H1 (cell line): ENCODE measurements at regions of chr4 and their contacts with region 1.

Region 1: DNA sequence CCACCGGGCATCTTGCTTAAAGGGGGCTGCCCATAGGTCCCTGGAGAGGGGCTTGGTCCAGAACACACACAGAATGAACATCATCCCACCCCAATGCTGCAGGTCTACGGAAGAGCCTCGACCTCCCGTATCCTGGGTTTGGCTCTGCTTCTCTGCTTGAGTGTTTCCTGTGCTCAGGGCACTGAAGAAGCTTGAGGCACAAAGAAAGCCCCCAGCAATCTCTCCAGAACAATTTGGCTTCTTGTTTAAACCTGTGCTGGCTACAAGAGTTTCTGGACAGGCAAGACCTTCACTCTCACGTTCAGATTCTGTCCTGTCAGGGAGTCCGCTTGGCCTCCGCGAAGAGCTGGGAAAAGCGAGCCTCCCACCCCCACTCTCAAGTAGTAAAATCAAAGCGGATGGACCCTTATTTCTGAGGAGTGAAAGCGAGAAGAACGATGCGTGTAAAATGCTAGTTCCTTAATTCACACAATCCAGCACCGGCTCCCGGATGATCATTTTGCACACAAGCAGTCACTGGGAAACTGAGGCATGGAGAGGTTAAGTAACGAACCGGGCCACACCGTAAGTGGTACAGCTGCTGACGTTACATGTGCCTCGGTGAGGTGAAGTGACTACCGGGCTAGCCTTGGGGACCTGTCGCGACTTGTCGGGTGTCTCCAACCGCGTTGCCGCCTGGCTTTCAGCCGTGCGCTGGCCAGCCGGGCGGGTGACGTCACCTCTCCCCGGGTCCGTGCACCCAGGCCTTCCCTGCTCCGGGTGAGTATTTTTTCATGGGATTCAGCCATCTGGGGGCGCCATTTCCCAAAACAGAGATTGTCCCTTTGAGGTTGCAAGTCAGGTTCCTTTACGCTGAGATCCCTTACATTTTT is 3.1 kb upstream of the SFRP2 start:
- DNase-seq: peak; percentile 85 to 97
- H3K4me3 ChIP-seq: peak overlapping the region; percentile 59 to 94 (median 78)
- H3K27ac ChIP-seq: no peak overlapping the region
- H3K4me1 ChIP-seq: peaks cover 0 to 18% (median 12%) of the 10 kb centered on the region in 4 experiments; a peak in 6 of 7 replicates
- H3K27me3 ChIP-seq: peaks cover 0 to 11% (median 8%) of the 10 kb centered on the region in 4 experiments; a peak in 5 of 7 replicates
- CTCF ChIP-seq: peak in 2 of 3 experiments; percentile 76 to 78; a peak in 3 of 4 replicates
- EP300 ChIP-seq: peak in 1 of 2 experiments; percentile 29; a peak in 1 of 3 replicates
- POLR2A ChIP-seq: no peak; a peak in 1 of 3 replicates
- RAD21 ChIP-seq: peak; percentile 73 to 81

Region 2: DNA sequence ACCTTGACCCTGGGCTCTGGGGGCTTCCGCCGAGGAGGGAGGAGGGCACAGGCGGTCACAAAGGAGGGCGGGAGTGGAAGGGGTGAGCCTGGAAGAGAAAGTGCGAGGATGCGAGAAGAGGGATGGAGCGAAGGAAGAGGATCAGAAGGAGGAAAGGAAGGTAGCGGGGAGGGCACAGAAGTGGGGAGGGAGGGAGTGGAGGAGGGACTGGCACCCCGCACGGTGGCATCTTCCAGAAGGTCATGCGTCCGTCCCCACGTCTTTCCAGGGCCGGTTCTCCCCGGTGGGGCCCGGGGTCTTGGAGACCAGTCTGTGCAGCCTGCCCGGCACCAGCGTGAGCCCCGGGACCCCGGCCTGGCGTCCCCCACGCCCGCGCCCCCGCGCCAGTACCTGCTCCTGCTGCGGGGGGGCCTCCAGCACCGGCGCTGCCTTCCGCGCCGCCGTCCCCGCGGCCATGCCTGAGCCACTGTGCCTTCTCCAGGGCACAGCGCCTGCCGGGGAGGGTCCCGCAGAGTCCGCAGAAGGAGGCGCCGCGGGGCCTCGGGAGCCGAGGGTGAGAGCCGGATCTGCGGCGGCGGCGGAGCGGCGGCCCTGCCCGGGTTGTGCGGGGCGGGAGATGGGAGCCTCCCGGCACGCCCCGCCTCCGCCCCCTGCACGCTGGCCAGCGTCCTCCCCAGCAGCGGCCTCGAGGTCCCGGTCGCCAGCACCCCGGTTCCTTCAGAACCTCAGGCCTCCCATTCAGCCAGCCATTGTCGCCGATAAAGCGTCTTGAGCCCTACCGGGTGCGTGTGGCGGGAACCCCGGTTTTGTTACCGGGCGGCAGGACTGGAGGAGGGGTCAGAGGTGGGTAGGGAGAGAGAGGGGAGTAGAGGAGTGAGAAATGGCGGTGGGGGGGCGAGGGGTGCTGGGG is 32.3 kb before region 1 on chr4 and contains the start of gene RNF175:
- CTCF ChIA-PET with region 1: interaction called, 5 read pairs
- POLR2A ChIA-PET with region 1: interaction called, 13 read pairs
- DNase-seq: peak in 1 of 2 experiments; percentile 71
- H3K4me3 ChIP-seq: peak within 1 kb of the TSS; percentile 70 to 87 (median 72)
- H3K27ac ChIP-seq: peak within 1 kb of the TSS; percentile 60; the same call in 1 of the 2 replicates
- H3K4me1 ChIP-seq: peaks cover 11 to 27% (median 21%) of the 10 kb centered on the region in 4 experiments; a peak in 6 of 7 replicates
- H3K27me3 ChIP-seq: peaks cover 0 to 4% (median 0%) of the 10 kb centered on the region in 4 experiments; a peak in 5 of 7 replicates
- CTCF ChIP-seq: no peak
- EP300 ChIP-seq: no peak
- POLR2A ChIP-seq: no peak; a peak in 1 of 3 replicates
- RAD21 ChIP-seq: no peak
- total RNA-seq, gene RNF175: 7.3 and 7.9 TPM in 2 replicates

Region 3: DNA sequence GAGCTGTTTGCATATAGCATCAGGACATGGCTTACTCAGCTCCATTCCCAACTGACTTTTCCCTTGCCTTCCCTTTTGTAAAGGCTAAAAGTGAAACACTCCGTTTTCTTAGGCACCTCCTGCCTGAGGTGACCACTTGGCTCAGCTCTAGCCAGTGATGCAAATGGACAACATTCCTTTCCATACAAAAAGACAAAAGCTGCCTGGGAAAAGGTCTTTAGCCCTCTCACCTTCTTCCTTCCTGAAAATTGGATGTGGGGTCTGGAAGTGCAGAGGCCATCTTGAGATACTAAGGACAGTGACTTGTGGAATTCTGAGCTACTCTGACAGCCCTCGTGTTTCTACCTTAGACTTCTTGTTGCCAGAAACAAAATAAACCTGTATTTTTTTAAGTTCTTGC is 24.6 kb after region 1 on chr4:
- CTCF ChIA-PET with region 1: interaction called, 10 read pairs
- POLR2A ChIA-PET with region 1: interaction called, 7 read pairs
- DNase-seq: no peak
- H3K4me3 ChIP-seq: no peak overlapping the region
- H3K27ac ChIP-seq: no peak overlapping the region
- H3K4me1 ChIP-seq: peaks cover 0 to 6% (median 0%) of the 10 kb centered on the region in 4 experiments; a peak in 1 of 7 replicates
- H3K27me3 ChIP-seq: peaks cover 0 to 1% (median 0%) of the 10 kb centered on the region in 4 experiments; a peak in 1 of 7 replicates
- CTCF ChIP-seq: no peak
- EP300 ChIP-seq: no peak
- POLR2A ChIP-seq: no peak
- RAD21 ChIP-seq: no peak

Region 4: GRCh38 chr4:154018659-154019058 is 226.7 kb after region 1 on chr4:
- CTCF ChIA-PET with region 1: interaction called, 117 read pairs
- POLR2A ChIA-PET with region 1: interaction called, 14 read pairs
- DNase-seq: peak; percentile 39 to 76
- H3K4me3 ChIP-seq: no peak overlapping the region
- H3K27ac ChIP-seq: no peak overlapping the region
- H3K4me1 ChIP-seq: no peaks in the 10 kb centered on the region
- H3K27me3 ChIP-seq: no peaks in the 10 kb centered on the region
- CTCF ChIP-seq: peak; percentile 70 to 79 (median 70)
- EP300 ChIP-seq: no peak
- POLR2A ChIP-seq: no peak
- RAD21 ChIP-seq: peak; percentile 87 to 88

Region 5: GRCh38 chr4:154049457-154050181 is 257.6 kb after region 1 on chr4:
- CTCF ChIA-PET with region 1: interaction called, 13 read pairs
- POLR2A ChIA-PET with region 1: interaction called, 4 read pairs
- DNase-seq: peak; percentile 17 to 65
- H3K4me3 ChIP-seq: no peak overlapping the region
- H3K27ac ChIP-seq: no peak overlapping the region
- H3K4me1 ChIP-seq: no peaks in the 10 kb centered on the region; a peak in 2 of 7 replicates
- H3K27me3 ChIP-seq: no peaks in the 10 kb centered on the region
- CTCF ChIP-seq: peak; percentile 34 to 58 (median 53); a peak in 3 of 4 replicates
- EP300 ChIP-seq: no peak
- POLR2A ChIP-seq: no peak
- RAD21 ChIP-seq: peak; percentile 51 to 57